Heart left ventricle (tissue), 16 donors: ENCODE measurements at regions of chr1 and their contacts with region 1.

Region 1: DNA sequence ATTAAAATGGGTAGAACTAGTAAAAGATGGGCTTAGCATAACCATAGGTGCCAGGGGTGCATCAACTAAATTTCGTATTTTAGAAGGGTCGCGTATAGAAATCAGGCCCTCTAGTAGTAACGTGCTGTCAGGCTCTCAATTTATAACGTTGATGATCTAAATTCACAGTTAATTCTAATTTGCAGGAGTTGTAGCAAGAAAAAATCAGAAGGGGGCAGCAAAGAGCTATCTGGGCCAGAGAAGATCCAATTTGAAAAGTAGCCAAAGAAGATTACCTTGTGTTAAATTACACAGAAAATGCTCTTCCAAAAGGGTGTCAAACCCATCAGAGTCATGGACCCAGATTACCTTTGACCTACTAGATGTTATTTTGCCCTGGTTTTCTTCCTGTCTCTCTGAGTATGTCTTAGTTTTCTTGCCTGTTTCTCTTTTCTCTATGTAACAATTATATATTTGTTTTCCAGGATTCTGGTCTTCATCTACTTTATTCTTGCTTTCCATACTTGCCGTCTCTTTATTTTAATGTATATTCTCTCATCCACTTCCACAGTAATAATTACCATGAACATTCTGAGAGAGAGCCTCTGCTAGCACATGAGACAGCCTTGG is 1030.9 kb downstream of the AMY1C start:
- DNase-seq: no peak
- ATAC-seq: no peak
- H3K4me3 ChIP-seq: no peak overlapping the region
- H3K27ac ChIP-seq: no peak overlapping the region
- H3K4me1 ChIP-seq: no peaks in the 10 kb centered on the region
- H3K27me3 ChIP-seq: no peaks in the 10 kb centered on the region
- CTCF ChIP-seq: peak; percentile 23 to 70 (median 58)
- POLR2A ChIP-seq: no peak

Region 2: DNA sequence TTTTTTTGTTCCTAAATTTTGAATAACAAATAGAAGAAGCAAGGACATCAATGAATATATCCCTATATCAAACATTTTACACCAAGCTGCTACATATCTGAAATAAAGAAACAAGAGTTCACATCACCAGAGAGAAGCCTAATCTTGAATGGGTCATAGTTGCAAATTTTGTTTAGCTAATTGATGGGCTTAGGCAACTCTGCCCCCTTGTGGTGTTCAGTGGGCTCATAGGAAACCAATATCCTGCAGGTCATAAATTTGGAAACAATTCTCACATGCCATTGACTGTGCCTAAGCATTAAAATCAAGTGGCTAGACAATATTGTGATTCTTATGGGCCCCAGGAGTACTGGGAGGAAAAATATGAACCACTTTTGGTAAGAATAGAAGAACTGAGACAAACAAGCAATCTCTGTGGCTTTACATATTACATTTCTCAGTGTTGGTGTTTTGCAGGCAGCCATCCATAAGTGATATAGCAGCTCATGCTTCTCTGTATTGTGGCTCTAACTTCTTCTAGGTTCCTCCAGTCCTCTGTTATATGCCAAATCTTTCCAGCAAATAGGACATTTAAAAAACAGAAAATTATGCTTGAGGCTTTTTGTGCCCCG is 1013.1 kb after region 1 on chr1:
- intact Hi-C with region 1: loop called in 3 of 10 experiments (anchors 10 kb)
- DNase-seq: no peak
- ATAC-seq: no peak
- H3K4me3 ChIP-seq: no peak overlapping the region
- H3K27ac ChIP-seq: no peak overlapping the region
- H3K4me1 ChIP-seq: no peaks in the 10 kb centered on the region
- H3K27me3 ChIP-seq: no peaks in the 10 kb centered on the region
- CTCF ChIP-seq: peak in 7 of 12 donors; percentile 4 to 36 (median 24)
- POLR2A ChIP-seq: no peak